ENCODE measurements at regions of chr20 and their contacts with region 1.

Region 1: GRCh38 chr20:31879143-31879987 is 8.9 kb downstream of the TTLL9 start:
- DNase-seq: peak; percentile 78
- H3K4me3 Mint-ChIP-seq: peak overlapping the region; percentile 92
- H3K27ac Mint-ChIP-seq: peak overlapping the region; percentile 77
- H3K4me1 Mint-ChIP-seq: peaks cover 24% of the 10 kb centered on the region
- H3K27me3 Mint-ChIP-seq: peaks cover 27% of the 10 kb centered on the region

Region 2: DNA sequence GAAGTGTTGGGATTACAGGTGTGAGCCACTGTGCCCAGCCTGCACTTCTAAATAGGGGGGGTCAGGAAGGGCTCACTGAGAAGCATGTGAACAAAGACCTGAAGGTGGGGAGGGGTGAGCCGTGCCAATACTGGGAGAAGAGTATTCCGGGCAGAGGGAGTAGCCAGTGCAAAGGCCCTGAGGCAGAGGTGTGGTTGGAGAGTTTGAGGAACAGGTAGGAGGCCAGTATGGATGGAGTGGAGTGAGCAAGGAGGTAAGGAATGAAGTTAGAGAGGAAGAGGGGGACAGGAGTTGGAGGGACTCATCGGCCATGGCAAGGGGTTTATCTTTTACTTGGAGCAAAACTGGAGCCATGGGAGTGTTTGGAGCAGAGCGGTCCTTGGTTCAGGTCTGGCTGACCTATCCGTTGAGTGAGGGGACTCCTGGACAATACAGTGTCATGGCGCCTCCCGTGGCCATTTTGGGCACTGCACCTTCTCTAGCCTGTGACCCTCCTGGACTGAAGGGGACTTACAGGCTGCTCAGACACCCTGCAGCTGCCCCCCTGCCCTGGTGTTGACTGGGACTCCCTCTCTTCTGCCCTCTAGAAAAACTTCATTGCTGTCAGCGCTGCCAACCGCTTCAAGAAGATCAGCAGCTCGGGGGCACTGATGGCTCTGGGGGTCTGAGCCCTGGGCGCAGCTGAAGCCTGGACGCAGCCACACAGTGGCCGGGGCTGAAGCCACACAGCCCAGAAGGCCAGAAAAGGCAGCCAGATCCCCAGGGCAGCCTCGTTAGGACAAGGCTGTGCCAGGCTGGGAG is 46.0 kb before region 1 on chr20:
- intact Hi-C with region 1: no loop called
- DNase-seq: peak; percentile 32
- H3K4me3 Mint-ChIP-seq: no peak overlapping the region
- H3K27ac Mint-ChIP-seq: no peak overlapping the region
- H3K4me1 Mint-ChIP-seq: peaks cover 7% of the 10 kb centered on the region
- H3K27me3 Mint-ChIP-seq: no peaks in the 10 kb centered on the region

Region 3: DNA sequence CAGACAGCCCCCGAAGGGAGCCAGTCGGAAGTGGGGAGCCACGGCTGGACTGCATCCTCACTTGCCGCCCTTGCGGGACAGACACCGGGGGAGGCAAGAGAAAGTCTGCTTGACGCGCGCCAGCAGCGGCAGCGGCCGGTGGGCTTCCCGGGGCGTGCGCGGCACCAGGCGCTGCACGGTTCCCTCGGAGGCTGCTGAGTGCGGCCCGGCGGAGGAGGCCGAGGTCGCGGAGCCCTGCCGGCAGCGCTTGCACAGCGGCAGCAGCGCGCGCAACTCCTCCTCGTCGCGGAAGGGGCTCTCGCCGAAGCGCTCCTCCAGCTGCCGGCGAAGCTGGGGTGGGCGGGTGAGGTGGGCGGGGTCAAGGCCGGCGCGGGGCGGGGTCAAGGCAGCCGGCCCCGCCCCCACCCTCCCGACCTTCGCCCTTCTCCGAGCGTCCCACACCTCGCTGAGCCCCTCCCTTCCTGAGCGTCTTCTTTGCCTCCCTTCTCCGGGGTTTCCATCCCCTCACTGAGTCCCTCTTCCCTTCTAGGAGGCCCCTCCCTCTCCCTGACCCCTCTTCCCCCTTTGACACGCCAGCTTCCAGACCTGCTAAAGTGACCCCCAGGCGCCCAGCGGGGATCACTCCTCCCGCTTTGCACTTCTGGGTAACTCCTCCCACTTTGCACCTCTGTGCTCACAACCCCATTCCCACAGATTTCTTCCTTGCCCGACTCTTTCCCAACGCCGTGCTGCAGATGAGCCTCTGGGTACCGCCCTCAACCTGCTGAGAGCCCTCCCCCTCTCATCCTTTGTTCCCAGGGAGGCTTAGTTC is 17.8 kb before region 1 on chr20:
- intact Hi-C with region 1: loop called (anchors 1 kb)
- DNase-seq: peak; percentile 49
- H3K4me3 Mint-ChIP-seq: peak overlapping the region; percentile 58
- H3K27ac Mint-ChIP-seq: no peak overlapping the region
- H3K4me1 Mint-ChIP-seq: peaks cover 10% of the 10 kb centered on the region
- H3K27me3 Mint-ChIP-seq: peaks cover 39% of the 10 kb centered on the region

Region 4: DNA sequence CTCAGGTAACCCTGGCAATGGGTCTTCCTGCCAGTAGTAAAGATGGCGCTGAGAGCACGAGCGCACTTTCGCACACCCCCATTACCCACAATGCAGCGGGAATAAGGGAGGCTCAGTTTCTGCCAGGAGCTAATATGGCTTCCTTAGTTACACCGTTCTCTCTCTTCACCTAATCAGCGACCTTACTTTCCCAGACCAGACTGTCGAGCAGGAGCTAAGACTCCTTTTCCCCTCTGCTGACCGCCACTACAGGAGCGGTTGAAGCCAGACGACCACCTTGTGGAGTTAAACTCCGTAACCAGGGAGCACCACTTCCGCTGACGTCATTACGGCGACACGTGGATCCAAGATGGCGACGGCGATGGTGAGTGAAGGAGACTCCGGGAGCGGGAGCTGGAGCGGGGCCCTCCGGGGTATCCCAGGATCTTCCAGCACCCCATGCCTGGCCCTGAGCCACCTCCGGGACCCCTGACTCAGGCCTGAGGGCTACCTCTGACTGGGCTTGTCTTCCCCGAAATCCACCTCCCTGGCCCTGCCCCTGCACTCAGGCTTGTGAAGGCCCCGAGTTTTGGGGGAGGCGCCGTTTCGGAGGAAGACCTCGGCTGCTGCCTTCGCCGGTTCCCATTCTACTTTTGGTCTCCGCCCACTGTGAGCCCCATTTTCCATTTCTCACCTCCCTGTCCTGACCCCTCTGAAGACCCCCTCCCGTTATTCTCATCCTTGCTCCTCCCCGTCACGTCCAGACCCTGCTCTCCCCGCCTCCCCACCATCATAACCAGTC is 230.2 kb after region 1 on chr20 and contains the start of gene TM9SF4:
- intact Hi-C with region 1: loop called (anchors 5 kb)
- DNase-seq: peak; percentile 84
- H3K4me3 Mint-ChIP-seq: peak within 1 kb of the TSS; percentile 92
- H3K27ac Mint-ChIP-seq: peak within 1 kb of the TSS; percentile 99
- H3K4me1 Mint-ChIP-seq: peaks cover 35% of the 10 kb centered on the region
- H3K27me3 Mint-ChIP-seq: peaks cover 4% of the 10 kb centered on the region
- total RNA-seq, gene TM9SF4: 49.5 and 49.6 TPM in 2 replicates